Activated T-helper 2 cell treated with anti-CD3 and anti-CD28 coated beads, Interferon-gamma antibody, Interleukin-2, Interleukin-4, amounts not matched to agents 10 μg/mL and 5 μg/mL and 100 μg/mL, durations not matched to agents 14 hours and 24 hours and 36 hours (primary cell): ENCODE measurements at regions of chr6 and their contacts with region 1.

Region 1: DNA sequence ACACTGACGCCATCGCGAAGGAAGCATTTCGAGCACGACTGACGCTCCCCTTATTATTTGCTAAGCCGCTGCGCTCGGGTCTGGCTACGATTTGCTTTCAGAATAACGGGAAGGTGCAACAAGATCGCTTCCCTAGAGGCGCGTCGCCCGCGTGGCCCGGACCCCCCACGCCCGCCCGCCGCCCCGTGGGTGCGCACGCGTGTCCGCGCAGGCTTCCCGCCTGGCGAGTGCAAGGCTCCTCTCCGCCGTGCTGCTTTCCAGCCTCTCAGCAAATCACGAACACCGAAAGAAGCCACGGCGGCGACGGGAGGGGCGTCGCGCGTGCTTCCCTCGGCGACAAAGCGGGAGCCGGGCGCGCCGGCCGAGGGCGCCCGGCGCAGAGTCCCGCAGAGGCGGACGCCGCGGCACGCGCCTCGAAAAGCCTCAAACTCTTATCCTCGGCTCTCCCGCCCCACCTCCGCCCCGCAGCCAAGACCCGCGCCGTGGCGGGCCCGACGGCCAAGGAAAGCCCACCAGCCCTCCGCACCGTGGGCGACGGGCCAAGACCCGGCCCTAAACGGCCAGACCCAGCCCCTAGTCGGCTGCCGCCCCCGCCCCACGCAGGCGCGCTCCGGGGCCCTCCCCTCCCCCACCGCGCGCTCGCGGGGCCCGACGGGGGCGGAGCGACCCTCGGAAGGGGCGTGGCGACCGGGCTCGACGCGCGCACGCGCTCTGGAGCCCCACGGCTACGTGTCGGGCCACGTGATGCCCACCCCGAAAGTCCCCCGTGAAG is 987 bp upstream of the QKI start:
- DNase-seq: peak; percentile 86
- H3K4me3 Mint-ChIP-seq: peak overlapping the region; percentile 87
- H3K27ac Mint-ChIP-seq: peak overlapping the region; percentile 91
- H3K4me1 Mint-ChIP-seq: peaks cover 29% of the 10 kb centered on the region
- H3K27me3 Mint-ChIP-seq: peaks cover 16% of the 10 kb centered on the region

Region 2: GRCh38 chr6:162727309-162728182 is 686.0 kb before region 1 on chr6 and contains the starts of genes PACRG and PRKN:
- intact Hi-C with region 1: loop called (anchors 5 kb)
- DNase-seq: peak; percentile 95
- H3K4me3 Mint-ChIP-seq: peak within 1 kb of the TSS; percentile 88
- H3K27ac Mint-ChIP-seq: peak within 1 kb of the TSS; percentile 84
- H3K4me1 Mint-ChIP-seq: peaks cover 11% of the 10 kb centered on the region
- H3K27me3 Mint-ChIP-seq: no peaks in the 10 kb centered on the region
- total RNA-seq, gene PACRG: not detected in 2 replicates
- total RNA-seq, gene PRKN: 0.51 TPM in 1 of 2 replicates, not detected in the other

Region 3: DNA sequence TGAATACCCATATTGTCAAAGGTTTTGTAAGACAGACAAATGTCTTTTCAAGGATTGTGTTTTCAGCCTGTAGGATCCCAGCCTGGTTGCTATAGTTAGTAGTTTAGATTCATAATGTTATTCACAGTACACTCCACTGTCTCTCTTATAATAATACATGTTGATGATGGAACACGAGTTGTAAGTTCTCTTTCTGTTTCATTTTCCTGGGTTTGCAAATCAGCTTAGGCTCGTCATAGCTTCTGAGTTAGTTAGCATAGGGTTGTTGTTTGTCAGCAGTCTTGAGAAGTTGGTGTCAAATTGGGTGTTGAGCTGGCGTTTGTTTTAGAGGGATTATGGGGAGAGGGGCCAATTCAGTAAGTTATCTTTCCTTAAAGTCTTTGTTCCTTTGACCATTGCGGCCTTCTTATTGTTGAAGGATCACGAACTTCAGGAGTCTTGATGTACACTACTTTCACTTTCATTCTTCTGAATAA is 46.8 kb after region 1 on chr6:
- intact Hi-C with region 1: loop called (anchors 1 kb)
- DNase-seq: peak; percentile 31
- H3K4me3 Mint-ChIP-seq: peak overlapping the region; percentile 93
- H3K27ac Mint-ChIP-seq: peak overlapping the region; percentile 98
- H3K4me1 Mint-ChIP-seq: peaks cover 73% of the 10 kb centered on the region
- H3K27me3 Mint-ChIP-seq: no peaks in the 10 kb centered on the region

Region 4: GRCh38 chr6:163554663-163555062 is 141.1 kb after region 1 on chr6:
- intact Hi-C with region 1: loop called (anchors 1 kb)
- DNase-seq: peak; percentile 36
- H3K4me3 Mint-ChIP-seq: no peak overlapping the region
- H3K27ac Mint-ChIP-seq: no peak overlapping the region
- H3K4me1 Mint-ChIP-seq: peaks cover 8% of the 10 kb centered on the region
- H3K27me3 Mint-ChIP-seq: no peaks in the 10 kb centered on the region

Region 5: GRCh38 chr6:163956571-163957407 is 543.3 kb after region 1 on chr6:
- intact Hi-C with region 1: loop called (anchors 5 kb)
- DNase-seq: peak; percentile 41
- H3K4me3 Mint-ChIP-seq: no peak overlapping the region
- H3K27ac Mint-ChIP-seq: no peak overlapping the region
- H3K4me1 Mint-ChIP-seq: no peaks in the 10 kb centered on the region
- H3K27me3 Mint-ChIP-seq: peaks cover 9% of the 10 kb centered on the region